ENCODE measurements at regions of chr16 and their contacts with region 1.

Region 1: DNA sequence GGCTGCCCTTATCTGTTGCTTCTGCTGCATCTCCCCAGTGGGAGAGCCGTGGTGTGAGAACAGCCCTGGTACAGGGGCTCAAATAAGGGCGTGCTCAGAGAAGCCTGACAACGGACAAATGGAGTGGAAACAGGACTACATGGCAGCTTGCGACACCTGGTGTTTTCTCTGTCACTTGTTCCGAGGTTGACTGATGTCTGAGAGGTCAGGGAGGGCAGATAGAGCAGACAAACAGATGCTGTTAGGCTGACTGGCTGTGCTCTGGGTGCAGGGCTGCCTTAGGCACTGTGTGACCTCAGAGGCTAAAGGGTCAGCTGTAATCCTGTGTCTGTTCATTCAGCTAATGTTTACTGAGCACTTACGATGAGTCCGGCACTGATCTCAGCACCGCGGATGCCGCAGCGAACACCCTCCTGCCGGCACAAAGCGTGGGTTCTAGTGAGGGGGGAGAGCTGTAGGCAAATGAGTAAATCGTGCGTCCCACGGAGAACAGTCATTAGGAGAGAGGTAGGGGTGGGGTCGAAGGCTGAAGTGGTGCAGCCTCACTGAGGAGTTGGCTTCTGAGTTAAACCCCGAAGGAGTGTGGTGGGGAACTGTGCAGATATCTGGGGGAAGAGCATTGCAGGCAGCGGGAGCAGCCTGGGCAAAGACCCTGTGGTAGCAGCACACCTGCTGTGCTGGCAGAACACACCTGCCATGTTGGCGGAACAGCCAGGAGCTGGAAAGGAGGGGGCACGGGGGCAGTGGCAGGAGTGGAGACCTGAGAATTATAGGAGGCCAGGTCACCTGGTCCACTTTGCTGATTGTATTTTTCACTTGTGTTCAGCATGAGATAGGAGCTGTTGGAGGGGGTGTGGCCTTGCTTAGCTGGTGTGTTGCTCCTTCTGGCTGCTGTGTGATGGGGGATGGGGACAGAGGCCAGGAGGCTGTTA is 35.0 kb downstream of the GPT2 start:
- DNase-seq: peak; percentile 51
- H3K4me3 Mint-ChIP-seq: no peak overlapping the region
- H3K27ac Mint-ChIP-seq: no peak overlapping the region
- H3K4me1 Mint-ChIP-seq: peaks cover 10% of the 10 kb centered on the region
- H3K27me3 Mint-ChIP-seq: no peaks in the 10 kb centered on the region

Region 2: GRCh38 chr16:46853713-46854443 is 65.2 kb before region 1 on chr16:
- CTCF ChIA-PET with region 1: interaction called, 59 read pairs
- POLR2A ChIA-PET with region 1: no interaction called
- intact Hi-C with region 1: loop called (anchors 2 kb)
- DNase-seq: peak; percentile 77
- H3K4me3 Mint-ChIP-seq: no peak overlapping the region
- H3K27ac Mint-ChIP-seq: no peak overlapping the region
- H3K4me1 Mint-ChIP-seq: no peaks in the 10 kb centered on the region
- H3K27me3 Mint-ChIP-seq: peaks cover 3% of the 10 kb centered on the region